Common myeloid progenitor, CD34-positive (primary cell): ENCODE measurements at regions of chr15 and their contacts with region 1.

Region 1: DNA sequence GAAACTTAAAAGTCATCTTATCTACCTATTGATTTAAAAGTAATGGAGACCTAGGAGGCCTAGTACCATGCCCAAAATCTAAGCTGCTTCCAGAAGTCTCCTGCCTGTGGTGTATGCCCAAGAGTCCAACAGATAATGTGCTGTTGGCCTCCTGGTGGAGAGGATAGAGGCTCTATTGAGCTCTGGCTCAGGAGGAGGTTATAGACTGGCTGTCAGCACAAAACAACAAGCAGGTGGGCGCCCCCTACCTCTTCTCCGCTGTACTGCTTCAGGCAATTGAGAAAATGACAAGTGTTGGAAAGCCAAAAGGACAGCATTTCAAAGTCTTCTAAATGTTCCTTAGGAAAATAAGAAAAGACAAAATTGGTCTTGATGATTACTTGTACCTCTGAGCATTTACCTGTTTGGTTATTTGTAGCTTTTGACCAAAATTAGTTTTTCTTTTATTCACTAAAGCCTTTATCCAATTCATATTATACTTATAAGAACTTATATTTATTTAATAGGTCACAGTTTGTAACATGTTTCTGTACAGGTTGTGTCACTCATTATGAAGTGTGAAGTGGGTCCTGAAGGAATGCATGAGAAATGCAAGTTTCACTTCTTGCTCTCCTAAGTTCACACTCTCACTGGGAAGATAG is 17.2 kb upstream of the GNB5 start:
- DNase-seq: peak; percentile 69 to 82 (median 77)
- H3K4me3 ChIP-seq: no peak overlapping the region
- H3K27ac ChIP-seq: no peak overlapping the region
- H3K4me1 ChIP-seq: peaks cover 6 to 26% (median 20%) of the 10 kb centered on the region in 4 experiments
- H3K27me3 ChIP-seq: no peaks in the 10 kb centered on the region

Region 2: DNA sequence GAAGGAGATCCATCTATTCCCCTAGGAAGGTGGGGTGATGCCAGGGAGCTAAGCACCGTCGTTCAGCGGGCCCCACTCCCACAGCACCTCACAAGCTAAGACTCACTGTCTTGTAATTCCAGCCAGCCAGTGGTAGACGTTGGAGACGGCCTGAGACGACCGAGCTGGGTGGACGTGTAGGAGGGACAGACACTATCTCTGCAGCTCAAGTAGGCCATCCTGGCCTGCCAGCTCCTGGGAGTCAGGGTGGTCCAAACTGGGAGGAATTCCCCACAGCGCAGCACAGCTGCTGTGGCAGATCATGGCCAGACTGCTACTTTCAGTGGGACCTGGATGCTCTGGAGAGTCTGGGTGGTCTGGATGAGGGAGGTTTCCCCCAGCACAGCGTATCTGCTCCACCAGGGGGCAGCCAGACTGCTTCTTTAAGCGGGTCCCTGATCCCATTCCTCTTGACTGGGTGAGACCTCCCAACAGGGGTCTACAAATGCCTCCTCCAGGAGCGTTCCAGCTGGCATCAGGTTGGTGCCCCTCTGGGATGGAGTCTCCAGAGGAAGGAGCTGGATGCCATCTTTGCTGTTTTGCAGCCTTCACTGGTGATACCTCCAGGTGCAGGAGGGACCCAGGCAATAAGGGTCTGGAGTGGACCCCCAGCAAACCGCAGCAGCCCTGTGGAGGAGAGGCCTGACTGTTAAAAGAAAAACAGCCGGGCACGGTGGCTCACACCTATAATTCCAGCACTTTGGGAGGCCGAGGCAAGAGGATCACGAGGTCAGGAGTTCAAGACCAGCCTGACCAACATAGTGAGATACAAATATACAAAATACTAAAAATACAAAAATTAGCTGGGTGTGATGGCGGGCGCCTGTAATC is 44.9 kb before region 1 on chr15:
- CTCF ChIA-PET with region 1: interaction called, 15 read pairs
- POLR2A ChIA-PET with region 1: no interaction called
- DNase-seq: peak in 2 of 3 donors; percentile 27 to 34
- H3K4me3 ChIP-seq: no peak overlapping the region
- H3K27ac ChIP-seq: no peak overlapping the region
- H3K4me1 ChIP-seq: no peaks in the 10 kb centered on the region
- H3K27me3 ChIP-seq: no peaks in the 10 kb centered on the region

Region 3: GRCh38 chr15:52196891-52197290 is 11.5 kb before region 1 on chr15:
- CTCF ChIA-PET with region 1: interaction called, 10 read pairs
- POLR2A ChIA-PET with region 1: no interaction called
- DNase-seq: no peak
- H3K4me3 ChIP-seq: no peak overlapping the region
- H3K27ac ChIP-seq: no peak overlapping the region
- H3K4me1 ChIP-seq: no peaks in the 10 kb centered on the region
- H3K27me3 ChIP-seq: no peaks in the 10 kb centered on the region

Region 4: DNA sequence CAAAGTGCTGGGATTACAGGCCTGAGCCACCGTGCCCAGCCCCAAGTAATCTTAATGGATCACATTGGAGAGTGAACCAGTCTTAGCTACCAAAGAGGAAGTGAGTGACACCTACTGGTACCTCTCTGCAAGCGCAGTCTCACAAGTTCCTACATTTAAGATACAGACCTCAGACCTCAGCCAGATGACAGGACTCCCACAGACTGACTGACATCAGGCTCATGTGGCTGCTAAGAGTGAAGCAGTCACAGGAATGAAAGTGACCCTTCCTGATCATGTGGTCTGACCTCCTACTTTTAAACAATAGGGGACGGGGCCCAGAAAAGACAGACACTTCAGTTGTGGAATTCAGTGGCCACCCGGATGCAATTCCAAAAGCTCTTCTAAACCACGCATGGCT is 19.0 kb after region 1 on chr15:
- CTCF ChIA-PET with region 1: interaction called, 11 read pairs
- POLR2A ChIA-PET with region 1: interaction called, 3 read pairs
- DNase-seq: peak; percentile 87 to 92 (median 89)
- H3K4me3 ChIP-seq: no peak overlapping the region
- H3K27ac ChIP-seq: no peak overlapping the region
- H3K4me1 ChIP-seq: peaks cover 0 to 11% (median 5%) of the 10 kb centered on the region in 4 experiments
- H3K27me3 ChIP-seq: no peaks in the 10 kb centered on the region